Naive thymus-derived CD4-positive, alpha-beta T cell (primary cell): ENCODE measurements at regions of chr9 and their contacts with region 1.

Region 1: DNA sequence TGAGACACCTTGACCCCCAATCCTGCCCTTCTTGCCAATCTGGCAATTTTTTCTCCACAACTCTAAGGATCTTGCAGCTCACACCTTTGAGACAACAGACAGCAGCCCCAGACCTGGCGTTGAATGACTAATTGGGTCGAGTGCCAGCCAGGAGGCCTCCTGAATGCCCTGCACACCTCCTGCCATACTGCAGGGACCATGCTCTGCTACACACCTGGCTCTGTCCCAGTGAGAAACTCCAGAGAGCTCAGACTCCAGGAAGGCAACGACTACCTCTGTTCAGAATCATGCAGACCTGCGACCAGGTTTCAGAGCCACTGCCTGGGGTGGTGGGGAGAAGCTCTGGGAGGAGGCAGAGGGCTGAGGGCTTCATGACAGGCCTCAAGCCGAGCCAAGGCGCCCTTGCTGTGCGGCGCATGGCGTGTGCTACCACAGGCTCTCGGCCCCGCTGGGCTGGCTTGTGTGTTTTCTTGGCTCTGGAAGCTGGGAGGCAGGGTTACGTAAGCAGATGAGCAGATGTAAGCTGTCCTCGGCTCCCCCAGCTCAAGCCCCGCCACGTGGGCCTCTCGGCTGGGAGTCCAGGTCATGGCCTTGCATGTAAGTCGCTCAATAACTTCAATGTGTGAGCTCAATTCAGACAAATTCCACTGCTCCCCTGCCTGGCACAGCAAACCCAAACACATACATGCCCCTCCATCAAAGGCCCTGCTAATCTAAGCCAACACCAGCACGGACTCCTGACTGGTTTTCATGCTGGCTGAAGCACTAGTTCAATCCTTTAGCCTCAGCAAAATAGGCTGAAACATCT is 27.5 kb downstream of the B4GALT1 start:
- DNase-seq: no peak
- ATAC-seq: no peak
- H3K4me3 ChIP-seq: no peak overlapping the region
- H3K4me3 Mint-ChIP-seq: peak overlapping the region in 9 of 10 donors; percentile 3 to 69 (median 32)
- H3K27ac ChIP-seq: no peak overlapping the region
- H3K27ac Mint-ChIP-seq: peak overlapping the region; percentile 53 to 98 (median 84)
- H3K4me1 ChIP-seq: peaks cover 72 to 92% of the 10 kb centered on the region in 2 donors
- H3K4me1 Mint-ChIP-seq: peaks cover 76 to 95% (median 85%) of the 10 kb centered on the region in 7 donors
- H3K27me3 ChIP-seq: no peaks in the 10 kb centered on the region
- H3K27me3 Mint-ChIP-seq: no peaks in the 10 kb centered on the region

Region 2: DNA sequence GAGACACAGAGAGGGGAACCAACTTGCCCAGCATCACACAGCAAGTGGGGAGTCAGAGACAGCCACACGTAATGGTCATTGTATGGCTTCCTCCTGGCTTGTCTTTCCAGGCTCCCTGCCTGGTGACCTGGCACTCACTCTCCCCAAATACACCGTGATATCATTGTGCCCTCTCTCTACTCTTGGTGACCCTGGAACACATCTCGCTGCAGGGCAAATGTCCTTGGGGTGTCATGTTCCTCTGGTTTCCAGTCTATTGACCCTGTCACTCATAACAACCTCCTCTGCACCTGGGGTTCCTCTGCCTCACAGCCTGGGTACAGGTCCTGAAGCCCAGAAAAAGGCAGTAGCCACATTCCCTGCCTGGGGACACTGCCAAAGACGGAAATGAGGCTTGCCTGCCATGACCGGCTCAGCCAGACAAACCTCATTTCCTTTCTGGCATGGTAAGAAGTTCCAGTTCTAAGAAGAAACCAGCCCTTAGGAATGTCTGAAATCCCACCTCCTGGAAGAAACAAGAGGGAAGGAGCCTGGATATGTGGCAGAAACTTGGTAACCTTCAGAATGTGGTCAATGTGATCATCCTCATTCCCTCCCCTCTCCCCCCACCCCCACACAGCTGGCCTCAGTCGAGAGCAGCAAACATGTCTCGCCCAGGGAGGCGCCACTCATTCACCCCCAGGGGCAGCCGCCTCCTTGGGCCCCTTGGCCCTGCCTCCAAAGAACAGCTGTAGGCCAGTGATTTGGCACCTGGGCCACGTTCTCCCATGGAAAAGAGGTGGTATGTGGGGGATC is 32.6 kb before region 1 on chr9:
- CTCF ChIA-PET with region 1: no interaction called
- POLR2A ChIA-PET with region 1: interaction called, 3 read pairs
- intact Hi-C with region 1: loop called in 1 of 2 experiments (anchors 5 kb)
- DNase-seq: no peak
- ATAC-seq: no peak
- H3K4me3 ChIP-seq: no peak overlapping the region
- H3K4me3 Mint-ChIP-seq: no peak overlapping the region
- H3K27ac ChIP-seq: no peak overlapping the region
- H3K27ac Mint-ChIP-seq: peak overlapping the region in 1 of 9 donors; percentile 55
- H3K4me1 ChIP-seq: no peaks in the 10 kb centered on the region
- H3K4me1 Mint-ChIP-seq: peaks cover 0 to 15% (median 0%) of the 10 kb centered on the region in 7 donors
- H3K27me3 ChIP-seq: no peaks in the 10 kb centered on the region
- H3K27me3 Mint-ChIP-seq: no peaks in the 10 kb centered on the region

Region 3: DNA sequence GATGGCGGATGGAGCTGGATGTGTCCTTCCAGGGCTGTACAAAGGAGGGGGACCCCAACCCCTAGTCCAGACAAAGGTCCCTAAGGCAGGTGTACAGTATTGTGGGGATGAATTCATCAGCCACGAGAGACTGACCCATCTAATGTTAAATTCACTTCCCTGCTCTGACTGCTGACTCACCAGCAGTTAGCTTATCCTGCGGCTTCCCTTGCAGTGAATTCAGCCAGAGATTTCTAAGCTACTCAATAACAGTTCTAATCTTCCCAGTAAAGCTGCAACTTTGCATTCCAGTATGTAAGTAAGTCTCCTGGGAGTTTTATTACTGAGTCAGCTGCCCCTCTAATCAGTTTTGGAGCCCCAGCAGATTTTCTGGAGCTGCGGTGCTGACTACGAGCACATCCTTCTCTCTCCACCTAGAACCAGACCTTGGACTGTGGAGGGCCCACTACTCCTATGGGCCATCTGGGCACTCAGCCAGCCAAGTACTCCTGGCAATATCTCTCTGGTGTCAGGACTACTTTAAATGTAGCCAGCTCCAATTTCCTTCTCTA is 11.5 kb after region 1 on chr9:
- CTCF ChIA-PET with region 1: interaction called, 4 read pairs
- POLR2A ChIA-PET with region 1: interaction called, 17 read pairs
- intact Hi-C with region 1: loop called in 1 of 2 experiments (anchors 1 kb)
- DNase-seq: no peak
- ATAC-seq: peak; percentile 61
- H3K4me3 ChIP-seq: no peak overlapping the region
- H3K4me3 Mint-ChIP-seq: peak overlapping the region in 3 of 10 donors; percentile 5 to 20 (median 18)
- H3K27ac ChIP-seq: no peak overlapping the region
- H3K27ac Mint-ChIP-seq: peak overlapping the region in 5 of 9 donors; percentile 39 to 92 (median 49)
- H3K4me1 ChIP-seq: peaks cover 36 to 44% of the 10 kb centered on the region in 2 donors
- H3K4me1 Mint-ChIP-seq: peaks cover 57 to 91% (median 88%) of the 10 kb centered on the region in 7 donors
- H3K27me3 ChIP-seq: no peaks in the 10 kb centered on the region
- H3K27me3 Mint-ChIP-seq: no peaks in the 10 kb centered on the region

Region 4: DNA sequence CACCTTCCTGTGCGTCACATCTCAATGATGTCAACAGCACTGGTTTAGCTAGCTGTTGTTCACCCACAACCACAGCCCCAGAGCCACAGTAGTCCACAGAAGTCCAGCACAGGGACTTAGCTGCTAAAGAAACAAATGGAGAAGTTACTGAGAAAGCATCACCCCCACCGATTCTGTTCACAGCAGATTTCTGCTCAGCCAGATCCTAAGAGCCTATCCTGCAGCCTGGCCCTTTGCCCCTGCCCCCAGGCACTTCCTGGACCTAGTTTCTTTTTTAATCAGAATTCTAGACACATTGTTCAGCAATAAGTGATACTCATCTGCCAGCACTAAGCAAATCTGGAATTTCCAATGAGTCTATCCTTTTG is 20.1 kb after region 1 on chr9:
- CTCF ChIA-PET with region 1: interaction called, 10 read pairs
- POLR2A ChIA-PET with region 1: interaction called, 92 read pairs
- intact Hi-C with region 1: loop called (anchors 1 to 2 kb)
- DNase-seq: peak in 8 of 9 donors; percentile 59 to 74 (median 66)
- ATAC-seq: peak; percentile 77
- H3K4me3 ChIP-seq: peak overlapping the region; percentile 2
- H3K4me3 Mint-ChIP-seq: peak overlapping the region; percentile 64 to 86 (median 78)
- H3K27ac ChIP-seq: peak overlapping the region; percentile 91
- H3K27ac Mint-ChIP-seq: peak overlapping the region; percentile 88 to 99 (median 97)
- H3K4me1 ChIP-seq: peaks cover 80 to 93% of the 10 kb centered on the region in 2 donors
- H3K4me1 Mint-ChIP-seq: peaks cover 74 to 99% (median 94%) of the 10 kb centered on the region in 7 donors
- H3K27me3 ChIP-seq: no peaks in the 10 kb centered on the region
- H3K27me3 Mint-ChIP-seq: no peaks in the 10 kb centered on the region